Activated B cell treated with CpG ODN at 0.5 μM for 24 hours (primary cell): ENCODE measurements at regions of chr9 and their contacts with region 1.

Region 1: GRCh38 chr9:115481769-115482168 is 363.8 kb upstream of the TNC start:
- DNase-seq: no peak
- ATAC-seq: no peak
- H3K4me3 Mint-ChIP-seq: no peak overlapping the region
- H3K27ac Mint-ChIP-seq: no peak overlapping the region
- H3K4me1 Mint-ChIP-seq: no peaks in the 10 kb centered on the region
- H3K27me3 Mint-ChIP-seq: peaks cover 2% of the 10 kb centered on the region
- CTCF ChIP-seq: no peak

Region 2: DNA sequence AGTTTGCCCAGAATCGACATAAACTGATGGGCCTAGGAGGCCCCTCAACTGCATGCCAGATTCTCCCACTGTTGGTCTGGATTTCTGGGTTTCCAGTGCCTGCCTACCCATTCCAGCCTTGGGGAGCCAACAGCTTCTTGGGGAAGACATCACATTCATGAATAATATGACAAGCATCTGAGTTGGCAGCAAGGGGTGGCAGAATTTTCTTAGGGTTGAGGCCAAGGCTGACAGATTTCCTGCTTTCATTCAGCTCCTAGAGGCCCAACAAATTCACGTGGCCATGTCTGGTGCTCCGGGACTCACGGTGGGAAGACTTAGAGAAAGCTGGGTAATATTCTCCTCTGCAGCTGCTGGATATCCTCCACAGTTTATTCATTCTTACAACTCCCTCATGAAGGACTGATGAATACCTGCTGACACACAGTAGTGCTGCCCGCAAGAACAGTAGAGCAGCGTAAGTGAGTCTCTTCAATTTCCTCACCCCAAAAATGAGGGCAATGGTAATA is 58.8 kb before region 1 on chr9:
- CTCF ChIA-PET with region 1: no interaction called
- POLR2A ChIA-PET with region 1: no interaction called
- intact Hi-C with region 1: loop called (anchors 10 kb)
- DNase-seq: no peak
- ATAC-seq: no peak
- H3K4me3 Mint-ChIP-seq: no peak overlapping the region
- H3K27ac Mint-ChIP-seq: no peak overlapping the region
- H3K4me1 Mint-ChIP-seq: no peaks in the 10 kb centered on the region
- H3K27me3 Mint-ChIP-seq: no peaks in the 10 kb centered on the region
- CTCF ChIP-seq: no peak